ENCODE measurements at regions of chr5 and their contacts with region 1.

Region 1: GRCh38 chr5:176447982-176448608 is at the start of gene FAF2:
- DNase-seq: peak; percentile 96
- ATAC-seq: peak; percentile 98
- H3K4me3 ChIP-seq: peak within 1 kb of the TSS; percentile 96
- H3K27ac ChIP-seq: peak within 1 kb of the TSS; percentile 91
- H3K4me1 ChIP-seq: peaks cover 6% of the 10 kb centered on the region; the same call in 1 of the 2 replicates
- H3K27me3 ChIP-seq: no peaks in the 10 kb centered on the region
- CTCF ChIP-seq: peak; percentile 93 to 99 (median 97); a peak in 5 of 6 replicates
- EP300 ChIP-seq: no peak
- POLR2A ChIP-seq: peak; percentile 97
- RAD21 ChIP-seq: no peak
- polyA plus RNA-seq, gene FAF2: 19.0 to 20.7 TPM

Region 2: GRCh38 chr5:176388444-176389134 is 59.5 kb before region 1 on chr5 and contains the starts of genes HIGD2A and NOP16:
- CTCF ChIA-PET with region 1: interaction called, 8 read pairs
- POLR2A ChIA-PET with region 1: no interaction called
- RAD21 ChIA-PET with region 1: no interaction called
- SMC1A ChIA-PET with region 1: interaction called, 4 read pairs
- in situ Hi-C with region 1: no loop called
- intact Hi-C with region 1: loop called (anchors 2 kb)
- DNase-seq: peak; percentile 97
- ATAC-seq: peak; percentile 91
- H3K4me3 ChIP-seq: peak within 1 kb of the TSS; percentile 90
- H3K27ac ChIP-seq: peak within 1 kb of the TSS; percentile 97
- H3K4me1 ChIP-seq: peaks cover 11% of the 10 kb centered on the region
- H3K27me3 ChIP-seq: no peaks in the 10 kb centered on the region
- CTCF ChIP-seq: no peak
- EP300 ChIP-seq: no peak
- POLR2A ChIP-seq: peak; percentile 90
- RAD21 ChIP-seq: no peak
- polyA plus RNA-seq, gene HIGD2A: 196 to 327 TPM
- polyA plus RNA-seq, gene NOP16: 177 to 196 TPM

Region 3: DNA sequence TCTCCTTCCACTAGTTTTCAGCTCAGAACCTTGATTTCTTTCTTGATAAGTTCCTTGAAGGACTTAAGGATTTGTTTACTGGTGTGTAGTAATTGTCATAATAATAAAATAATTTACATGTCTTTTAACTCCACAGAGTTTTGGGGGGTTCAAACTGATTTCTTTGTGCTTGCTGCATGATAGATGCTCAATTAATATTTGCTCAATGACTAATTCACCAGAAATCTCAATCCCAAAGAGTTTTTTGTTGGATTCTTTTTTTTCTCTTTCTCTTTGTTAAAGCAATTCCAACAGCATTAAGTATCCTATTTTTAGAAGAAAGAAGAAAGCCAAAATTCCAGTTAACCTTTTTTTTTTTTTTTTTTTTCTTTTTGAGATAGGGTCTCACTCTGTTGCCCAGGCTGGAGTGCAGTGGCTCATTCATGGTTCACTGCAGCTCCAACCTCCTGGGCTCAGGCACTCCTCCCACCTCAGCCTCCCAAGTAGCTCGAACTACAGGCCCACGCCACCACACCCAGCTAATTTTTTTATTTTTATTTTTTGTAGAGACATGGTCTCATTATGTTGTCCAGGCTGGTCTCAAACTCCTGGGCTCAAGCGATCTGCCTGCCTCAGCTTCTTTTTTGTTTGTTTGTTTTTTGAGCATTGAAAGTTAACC is 10.9 kb after region 1 on chr5:
- CTCF ChIA-PET with region 1: interaction called, 14 read pairs
- POLR2A ChIA-PET with region 1: no interaction called
- RAD21 ChIA-PET with region 1: no interaction called
- SMC1A ChIA-PET with region 1: no interaction called
- in situ Hi-C with region 1: no loop called
- intact Hi-C with region 1: no loop called
- DNase-seq: no peak
- ATAC-seq: no peak
- H3K4me3 ChIP-seq: no peak overlapping the region
- H3K27ac ChIP-seq: no peak overlapping the region
- H3K4me1 ChIP-seq: no peaks in the 10 kb centered on the region
- H3K27me3 ChIP-seq: no peaks in the 10 kb centered on the region
- CTCF ChIP-seq: no peak
- EP300 ChIP-seq: no peak
- POLR2A ChIP-seq: no peak
- RAD21 ChIP-seq: no peak

Region 4: GRCh38 chr5:176934309-176934930 is 486.3 kb after region 1 on chr5:
- CTCF ChIA-PET with region 1: no interaction called
- POLR2A ChIA-PET with region 1: no interaction called
- RAD21 ChIA-PET with region 1: no interaction called
- SMC1A ChIA-PET with region 1: no interaction called
- in situ Hi-C with region 1: no loop called
- intact Hi-C with region 1: no loop called
- DNase-seq: no peak
- ATAC-seq: no peak
- H3K4me3 ChIP-seq: no peak overlapping the region
- H3K27ac ChIP-seq: no peak overlapping the region
- H3K4me1 ChIP-seq: no peaks in the 10 kb centered on the region
- H3K27me3 ChIP-seq: no peaks in the 10 kb centered on the region
- CTCF ChIP-seq: no peak
- EP300 ChIP-seq: no peak
- POLR2A ChIP-seq: no peak
- RAD21 ChIP-seq: no peak

Measured in GM12878 (cell line).